Heart right ventricle (tissue), 16 donors: ENCODE measurements at regions of chr3 and their contacts with region 1.

Region 1: DNA sequence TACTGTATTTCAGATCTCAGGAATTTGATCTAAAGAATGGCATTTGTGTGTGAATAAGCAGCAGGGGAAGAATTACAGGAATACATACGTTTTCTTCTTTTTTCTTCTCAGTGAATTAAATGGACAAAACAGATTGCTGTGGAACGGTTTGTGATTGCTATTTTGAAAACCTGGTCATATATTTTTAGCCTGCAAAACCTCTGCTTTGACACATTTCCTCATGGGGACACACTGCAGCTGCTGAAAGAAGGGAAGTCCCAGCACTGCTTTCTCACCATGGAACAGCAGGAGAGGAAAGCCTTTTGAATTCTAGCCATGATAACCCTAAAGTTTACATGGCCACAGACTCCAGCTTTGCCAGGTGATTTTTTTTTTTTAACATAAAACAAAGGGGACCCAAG is 315.0 kb downstream of the OXSM start:
- DNase-seq: peak in 1 of 2 donors; percentile 16
- ATAC-seq: peak in 7 of 8 donors; percentile 38 to 76 (median 69)
- H3K4me3 ChIP-seq: no peak overlapping the region
- H3K27ac ChIP-seq: peak overlapping the region in 9 of 10 donors; percentile 36 to 77 (median 68)
- H3K4me1 ChIP-seq: peaks cover 0 to 66% (median 52%) of the 10 kb centered on the region in 9 donors
- H3K27me3 ChIP-seq: no peaks in the 10 kb centered on the region
- CTCF ChIP-seq: no peak

Region 2: DNA sequence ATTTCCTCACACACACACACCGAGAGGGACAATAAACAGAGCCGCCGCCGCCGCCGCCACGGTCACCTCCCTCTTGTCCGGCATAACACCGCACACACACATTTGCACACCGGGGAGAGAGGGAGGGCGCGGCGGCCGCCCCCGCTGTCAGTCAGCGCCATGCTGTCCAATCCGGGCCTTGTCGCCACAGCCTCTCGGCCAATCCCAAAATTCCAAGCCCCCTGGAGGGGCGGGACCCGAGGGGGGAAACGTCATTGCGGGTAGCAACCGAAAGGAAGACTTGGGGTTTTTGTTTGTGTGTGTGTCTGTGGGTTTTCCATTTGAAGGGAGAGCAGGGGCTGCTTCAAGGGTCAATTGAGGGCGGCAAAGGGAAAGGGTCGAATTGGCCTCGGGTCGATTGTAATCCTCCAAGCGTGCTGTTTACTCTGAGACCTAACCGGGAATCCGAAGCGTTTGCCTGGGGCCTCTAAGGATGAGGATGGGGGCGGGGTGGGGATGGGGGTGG is 440.0 kb before region 1 on chr3 and contains the start of gene TOP2B:
- intact Hi-C with region 1: loop called in 2 of 10 experiments (anchors 10 kb)
- DNase-seq: peak; percentile 95 to 97
- ATAC-seq: peak; percentile 98 to 100 (median 99)
- H3K4me3 ChIP-seq: peak within 1 kb of the TSS; percentile 64 to 89 (median 76)
- H3K27ac ChIP-seq: peak within 1 kb of the TSS; percentile 93 to 99 (median 98)
- H3K4me1 ChIP-seq: peaks cover 3 to 44% (median 42%) of the 10 kb centered on the region in 9 donors
- H3K27me3 ChIP-seq: no peaks in the 10 kb centered on the region
- CTCF ChIP-seq: no peak
- total RNA-seq, gene TOP2B: 87.4 to 126 (median 102) TPM

Region 3: DNA sequence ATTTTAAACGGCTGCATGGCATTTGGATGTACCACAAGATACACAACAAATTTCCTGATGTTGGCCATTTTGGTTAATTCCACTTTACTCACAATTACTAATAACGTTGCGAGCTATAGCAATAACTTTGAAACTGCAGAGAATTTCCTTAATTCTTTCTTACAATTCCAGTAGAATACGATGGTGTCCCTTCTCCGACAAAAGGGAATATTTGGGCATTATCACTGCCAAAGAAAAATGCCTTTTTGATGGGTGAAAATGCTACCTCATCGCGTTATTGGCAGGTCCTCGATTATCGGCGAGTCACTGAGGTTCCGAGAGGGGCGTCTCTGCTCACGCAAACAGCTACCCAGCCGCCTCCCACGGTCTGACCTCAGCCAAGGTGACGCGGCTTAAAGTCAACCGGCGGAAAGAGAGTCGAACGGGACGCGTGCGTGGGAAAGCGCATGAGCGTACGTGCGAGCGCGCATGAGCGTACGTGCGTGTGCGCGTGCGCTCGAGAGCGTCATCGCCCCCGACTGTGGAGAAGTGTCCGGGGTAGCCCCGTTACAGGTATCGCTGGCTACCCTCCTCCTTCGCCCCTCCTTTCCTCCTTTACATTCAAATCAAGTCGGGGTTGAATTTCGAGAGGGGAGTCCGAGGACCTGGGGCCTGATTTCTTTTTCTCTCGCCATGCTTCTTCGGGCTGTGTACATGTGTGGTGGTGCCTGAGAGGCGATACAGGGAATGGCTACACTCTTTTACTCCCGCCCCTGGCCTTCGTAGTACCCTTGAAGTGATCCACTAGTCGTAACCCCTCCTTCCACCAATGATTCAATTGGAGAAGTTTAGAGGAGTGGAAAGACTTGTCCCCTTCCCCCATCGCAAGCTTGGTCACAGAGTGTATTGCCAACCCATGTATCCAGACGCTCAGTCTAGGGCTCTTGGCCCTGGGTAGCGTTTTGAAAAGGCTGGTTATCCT is 315.0 kb before region 1 on chr3 and contains the start of gene OXSM:
- intact Hi-C with region 1: loop called in 1 of 10 experiments (anchors 10 kb)
- DNase-seq: peak; percentile 90 to 92
- ATAC-seq: peak; percentile 99
- H3K4me3 ChIP-seq: peak within 1 kb of the TSS; percentile 34 to 84 (median 62)
- H3K27ac ChIP-seq: peak within 1 kb of the TSS; percentile 14 to 94 (median 86)
- H3K4me1 ChIP-seq: peaks cover 0 to 33% (median 22%) of the 10 kb centered on the region in 9 donors
- H3K27me3 ChIP-seq: no peaks in the 10 kb centered on the region
- CTCF ChIP-seq: no peak
- total RNA-seq, gene OXSM: 12.7 to 18.0 (median 16.1) TPM

Region 4: DNA sequence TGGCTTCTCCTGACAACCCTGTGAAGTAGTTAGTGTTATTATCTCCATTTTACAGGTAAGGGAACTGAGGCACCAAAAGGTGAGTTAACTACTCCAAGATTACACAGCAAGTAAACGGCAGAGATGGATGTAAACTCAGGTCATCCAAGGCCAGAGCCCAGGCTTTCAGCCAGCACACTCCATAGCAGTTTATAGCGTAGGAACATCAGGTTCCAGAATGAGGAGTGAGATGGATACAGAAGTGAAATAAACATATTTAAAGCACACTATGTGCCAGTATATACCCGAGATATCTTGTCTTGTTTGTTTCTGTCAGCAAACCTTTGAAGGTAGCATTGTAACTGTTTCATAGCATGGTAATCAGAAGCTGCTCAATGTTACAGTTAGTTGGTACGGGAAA is 36.0 kb before region 1 on chr3:
- intact Hi-C with region 1: loop called in 1 of 10 experiments (anchors 5 kb)
- DNase-seq: peak; percentile 7 to 39
- ATAC-seq: peak in 7 of 8 donors; percentile 42 to 97 (median 93)
- H3K4me3 ChIP-seq: no peak overlapping the region
- H3K27ac ChIP-seq: peak overlapping the region in 1 of 10 donors; percentile 41
- H3K4me1 ChIP-seq: peaks cover 0 to 15% (median 3%) of the 10 kb centered on the region in 9 donors
- H3K27me3 ChIP-seq: no peaks in the 10 kb centered on the region
- CTCF ChIP-seq: no peak

Region 5: GRCh38 chr3:26236526-26236925 is 131.7 kb after region 1 on chr3:
- intact Hi-C with region 1: loop called in 3 of 10 experiments (anchors 5 to 10 kb)
- DNase-seq: peak in 1 of 2 donors; percentile 65
- ATAC-seq: peak in 7 of 8 donors; percentile 52 to 94 (median 87)
- H3K4me3 ChIP-seq: no peak overlapping the region
- H3K27ac ChIP-seq: peak overlapping the region in 3 of 10 donors; percentile 2 to 31 (median 2)
- H3K4me1 ChIP-seq: peaks cover 0 to 22% (median 3%) of the 10 kb centered on the region in 9 donors
- H3K27me3 ChIP-seq: no peaks in the 10 kb centered on the region
- CTCF ChIP-seq: no peak